Activated CD8-positive, alpha-beta T cell treated with anti-CD3 and anti-CD28 coated beads, Interleukin-2, amount 10 ng/mL, durations not matched to agents 7 days and 5 days (primary cell): ENCODE measurements at regions of chr3 and their contacts with region 1.

Region 1: DNA sequence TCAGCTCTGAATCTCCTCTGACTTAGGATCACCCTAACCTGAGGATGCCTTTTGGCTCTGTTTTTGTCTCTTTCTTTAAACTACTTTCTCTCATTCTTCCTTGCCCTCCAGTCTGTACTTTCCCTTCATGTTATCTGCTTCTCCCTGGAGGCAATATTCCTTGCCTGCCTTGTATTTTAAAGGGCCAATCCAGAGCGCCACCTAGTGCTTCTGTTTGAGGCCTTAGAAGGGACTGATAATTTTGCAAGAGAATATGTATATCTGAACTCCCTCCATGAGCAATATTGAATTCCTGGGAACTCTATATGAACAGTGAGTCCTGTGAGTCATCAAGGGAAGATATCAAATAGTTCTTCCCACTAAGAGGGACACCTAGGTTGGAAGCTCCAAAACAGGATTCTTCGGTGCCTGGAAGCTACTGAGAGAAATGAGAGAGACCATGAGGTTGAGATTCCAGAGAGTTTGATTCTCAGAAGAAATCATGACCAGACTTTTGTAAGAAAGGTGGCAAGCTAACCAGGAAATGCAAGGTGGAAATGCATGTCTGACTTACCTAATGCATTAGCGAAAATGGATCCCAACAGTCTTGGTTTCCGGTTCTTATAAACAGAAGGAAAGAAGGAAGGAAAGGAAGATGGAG is 203.8 kb upstream of the CD96 start:
- DNase-seq: peak; percentile 69
- ATAC-seq: no peak
- H3K4me3 Mint-ChIP-seq: no peak overlapping the region
- H3K27ac Mint-ChIP-seq: peak overlapping the region; percentile 12
- H3K4me1 Mint-ChIP-seq: peaks cover 23% of the 10 kb centered on the region
- H3K27me3 Mint-ChIP-seq: no peaks in the 10 kb centered on the region

Region 2: DNA sequence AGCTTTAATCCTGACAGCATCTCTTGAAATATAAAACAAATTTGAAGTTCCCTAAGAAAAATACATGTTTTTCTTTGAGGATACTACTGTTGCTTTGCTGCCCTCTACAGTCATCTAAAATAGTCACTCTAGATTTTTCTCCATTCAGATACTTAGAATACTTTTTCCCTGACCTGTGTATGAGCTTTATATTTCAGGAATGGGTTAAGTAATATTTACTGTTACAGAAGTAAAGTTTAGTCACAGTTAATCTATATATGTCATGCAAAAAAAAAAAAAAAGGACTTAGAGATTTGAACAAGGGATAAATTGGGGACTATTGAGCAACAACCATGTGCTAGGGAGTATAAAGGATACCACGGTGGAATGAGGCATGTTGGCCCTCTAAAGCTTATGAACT is 257.8 kb before region 1 on chr3:
- CTCF ChIA-PET with region 1: interaction called, 11 read pairs
- POLR2A ChIA-PET with region 1: no interaction called
- DNase-seq: no peak
- ATAC-seq: no peak
- H3K4me3 Mint-ChIP-seq: no peak overlapping the region
- H3K27ac Mint-ChIP-seq: no peak overlapping the region
- H3K4me1 Mint-ChIP-seq: no peaks in the 10 kb centered on the region
- H3K27me3 Mint-ChIP-seq: peaks cover 11% of the 10 kb centered on the region

Region 3: GRCh38 chr3:111326144-111326995 is 11.8 kb before region 1 on chr3:
- CTCF ChIA-PET with region 1: interaction called, 15 read pairs
- POLR2A ChIA-PET with region 1: interaction called, 3 read pairs
- DNase-seq: peak; percentile 36
- ATAC-seq: no peak
- H3K4me3 Mint-ChIP-seq: no peak overlapping the region
- H3K27ac Mint-ChIP-seq: peak overlapping the region; percentile 11
- H3K4me1 Mint-ChIP-seq: peaks cover 40% of the 10 kb centered on the region
- H3K27me3 Mint-ChIP-seq: no peaks in the 10 kb centered on the region

Region 4: GRCh38 chr3:111392901-111393351 is 54.7 kb after region 1 on chr3:
- CTCF ChIA-PET with region 1: no interaction called
- POLR2A ChIA-PET with region 1: no interaction called
- DNase-seq: peak; percentile 61
- ATAC-seq: peak; percentile 76
- H3K4me3 Mint-ChIP-seq: no peak overlapping the region
- H3K27ac Mint-ChIP-seq: no peak overlapping the region
- H3K4me1 Mint-ChIP-seq: peaks cover 17% of the 10 kb centered on the region
- H3K27me3 Mint-ChIP-seq: no peaks in the 10 kb centered on the region